ENCODE measurements at regions of chr6 and their contacts with region 1.

Region 1: DNA sequence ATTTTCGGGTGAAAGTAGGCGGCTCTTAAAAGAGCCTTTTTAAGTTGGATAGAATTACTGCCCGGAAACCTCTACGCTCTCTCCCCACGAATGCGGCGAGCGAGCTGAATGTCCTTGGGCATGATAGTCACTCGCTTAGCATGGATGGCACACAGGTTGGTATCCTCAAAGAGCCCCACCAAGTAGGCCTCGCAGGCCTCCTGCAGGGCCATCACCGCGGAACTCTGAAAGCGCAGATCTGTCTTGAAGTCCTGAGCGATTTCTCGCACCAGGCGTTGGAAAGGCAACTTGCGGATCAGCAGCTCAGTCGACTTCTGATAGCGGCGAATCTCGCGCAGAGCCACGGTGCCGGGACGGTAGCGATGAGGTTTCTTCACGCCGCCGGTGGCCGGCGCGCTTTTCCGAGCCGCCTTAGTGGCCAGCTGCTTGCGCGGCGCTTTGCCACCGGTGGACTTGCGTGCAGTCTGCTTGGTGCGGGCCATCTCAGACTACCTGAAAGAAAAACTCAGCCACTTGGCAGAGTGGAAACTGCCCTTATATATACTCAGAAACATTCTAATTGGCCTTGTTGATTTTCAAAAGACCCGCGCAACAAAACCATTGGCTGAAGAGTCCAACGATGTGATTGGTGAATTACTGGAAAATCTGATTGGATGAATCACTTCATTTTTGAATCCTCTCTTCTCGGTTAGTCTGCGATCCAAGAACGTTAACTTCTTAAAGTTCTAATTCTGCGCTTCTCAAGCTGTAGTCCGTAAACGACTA is 93.9 kb upstream of the BTN3A2 start:
- DNase-seq: peak; percentile 60 to 92 (median 75)
- ATAC-seq: peak; percentile 25
- H3K4me3 ChIP-seq: peak overlapping the region; percentile 59
- H3K4me3 Mint-ChIP-seq: no peak overlapping the region
- H3K27ac ChIP-seq: peak overlapping the region; percentile 82 to 84
- H3K27ac Mint-ChIP-seq: no peak overlapping the region
- H3K4me1 ChIP-seq: peaks cover 28% of the 10 kb centered on the region
- H3K4me1 Mint-ChIP-seq: peaks cover 7% of the 10 kb centered on the region
- H3K27me3 ChIP-seq: no peaks in the 10 kb centered on the region
- H3K27me3 Mint-ChIP-seq: no peaks in the 10 kb centered on the region
- CTCF ChIP-seq: no peak

Region 2: DNA sequence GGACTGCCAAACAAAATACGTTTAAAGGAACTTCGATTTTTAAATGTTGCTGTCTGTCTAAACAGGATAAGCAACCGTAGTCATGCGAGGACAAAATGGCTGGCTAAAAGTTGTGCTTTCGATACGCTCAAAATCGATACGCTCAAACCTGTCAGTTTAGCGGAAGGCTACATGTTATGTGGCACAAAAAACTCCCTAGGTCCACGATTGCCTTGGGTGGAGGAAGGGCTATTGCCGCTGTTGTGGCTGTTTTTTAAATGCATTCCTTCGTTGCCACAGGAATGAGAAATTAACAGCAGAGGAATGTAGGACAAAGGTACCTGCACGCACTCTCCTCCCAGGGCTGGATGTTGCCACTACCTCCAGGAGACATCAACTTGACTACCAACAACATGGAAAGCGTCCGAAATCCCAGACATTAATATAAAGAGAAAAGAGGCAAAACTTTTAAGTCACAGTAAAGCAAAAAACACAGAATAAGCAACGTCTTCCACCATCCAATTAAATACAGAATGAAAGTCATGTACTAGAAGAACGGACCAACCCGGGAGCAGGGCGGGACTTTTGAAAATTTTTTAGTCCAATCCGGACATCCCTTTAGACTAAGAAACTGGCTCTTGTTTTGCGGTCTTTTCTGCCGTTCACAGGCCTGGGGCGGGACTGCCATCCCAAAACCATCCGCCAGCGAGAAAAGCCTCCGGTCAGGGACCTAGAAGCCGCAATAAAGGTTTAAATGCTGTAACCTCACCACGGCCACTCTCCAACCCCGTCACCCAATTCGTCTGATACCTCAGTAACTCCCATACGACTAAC is 216.0 kb before region 1 on chr6:
- CTCF ChIA-PET with region 1: no interaction called
- POLR2A ChIA-PET with region 1: interaction called, 35 read pairs
- intact Hi-C with region 1: no loop called
- DNase-seq: peak; percentile 68 to 97 (median 80)
- ATAC-seq: peak; percentile 71
- H3K4me3 ChIP-seq: peak overlapping the region; percentile 89
- H3K4me3 Mint-ChIP-seq: peak overlapping the region; percentile 97
- H3K27ac ChIP-seq: peak overlapping the region; percentile 81
- H3K27ac Mint-ChIP-seq: peak overlapping the region; percentile 96
- H3K4me1 ChIP-seq: peaks cover 29% of the 10 kb centered on the region
- H3K4me1 Mint-ChIP-seq: peaks cover 28% of the 10 kb centered on the region
- H3K27me3 ChIP-seq: no peaks in the 10 kb centered on the region
- H3K27me3 Mint-ChIP-seq: no peaks in the 10 kb centered on the region
- CTCF ChIP-seq: no peak

Region 3: DNA sequence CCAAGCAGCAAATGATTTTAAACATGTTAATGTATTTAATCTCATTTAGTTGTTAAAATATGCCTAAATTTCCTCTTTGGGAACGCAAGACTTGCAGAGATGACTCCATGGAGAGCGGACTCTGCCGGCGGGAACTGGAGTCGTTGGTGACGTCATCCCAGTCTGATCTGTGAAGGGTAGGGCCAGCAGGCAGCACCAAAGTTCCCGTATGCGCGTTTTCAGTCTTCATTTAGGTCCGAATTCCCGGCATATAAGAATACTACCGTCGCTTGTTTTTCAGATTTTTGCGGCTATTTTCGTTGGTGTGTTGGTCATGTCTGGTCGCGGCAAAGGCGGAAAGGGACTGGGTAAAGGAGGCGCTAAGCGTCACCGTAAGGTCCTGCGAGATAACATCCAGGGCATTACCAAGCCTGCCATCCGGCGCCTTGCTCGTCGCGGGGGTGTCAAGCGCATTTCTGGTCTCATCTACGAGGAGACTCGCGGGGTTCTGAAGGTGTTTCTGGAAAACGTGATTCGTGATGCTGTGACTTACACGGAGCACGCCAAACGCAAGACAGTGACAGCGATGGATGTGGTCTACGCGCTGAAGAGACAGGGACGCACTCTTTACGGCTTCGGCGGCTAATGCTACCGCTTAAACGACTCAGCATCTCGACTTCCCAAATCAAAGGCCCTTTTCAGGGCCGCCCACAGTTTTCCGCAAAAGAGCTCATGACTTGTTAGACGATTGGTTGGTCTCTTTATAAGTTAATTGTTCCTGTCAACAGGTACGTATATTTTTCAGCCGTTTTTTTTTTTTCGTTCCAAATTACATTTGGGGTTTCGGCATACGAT is 66.5 kb before region 1 on chr6:
- CTCF ChIA-PET with region 1: interaction called, 7 read pairs
- POLR2A ChIA-PET with region 1: interaction called, 463 read pairs
- intact Hi-C with region 1: loop called in 1 of 2 experiments (anchors 1 kb)
- DNase-seq: peak; percentile 73 to 98 (median 80)
- ATAC-seq: peak; percentile 69
- H3K4me3 ChIP-seq: peak overlapping the region; percentile 68
- H3K4me3 Mint-ChIP-seq: no peak overlapping the region
- H3K27ac ChIP-seq: peak overlapping the region; percentile 89 to 90
- H3K27ac Mint-ChIP-seq: no peak overlapping the region
- H3K4me1 ChIP-seq: peaks cover 34% of the 10 kb centered on the region
- H3K4me1 Mint-ChIP-seq: peaks cover 8% of the 10 kb centered on the region
- H3K27me3 ChIP-seq: no peaks in the 10 kb centered on the region
- H3K27me3 Mint-ChIP-seq: no peaks in the 10 kb centered on the region
- CTCF ChIP-seq: peak; percentile 32

Region 4: DNA sequence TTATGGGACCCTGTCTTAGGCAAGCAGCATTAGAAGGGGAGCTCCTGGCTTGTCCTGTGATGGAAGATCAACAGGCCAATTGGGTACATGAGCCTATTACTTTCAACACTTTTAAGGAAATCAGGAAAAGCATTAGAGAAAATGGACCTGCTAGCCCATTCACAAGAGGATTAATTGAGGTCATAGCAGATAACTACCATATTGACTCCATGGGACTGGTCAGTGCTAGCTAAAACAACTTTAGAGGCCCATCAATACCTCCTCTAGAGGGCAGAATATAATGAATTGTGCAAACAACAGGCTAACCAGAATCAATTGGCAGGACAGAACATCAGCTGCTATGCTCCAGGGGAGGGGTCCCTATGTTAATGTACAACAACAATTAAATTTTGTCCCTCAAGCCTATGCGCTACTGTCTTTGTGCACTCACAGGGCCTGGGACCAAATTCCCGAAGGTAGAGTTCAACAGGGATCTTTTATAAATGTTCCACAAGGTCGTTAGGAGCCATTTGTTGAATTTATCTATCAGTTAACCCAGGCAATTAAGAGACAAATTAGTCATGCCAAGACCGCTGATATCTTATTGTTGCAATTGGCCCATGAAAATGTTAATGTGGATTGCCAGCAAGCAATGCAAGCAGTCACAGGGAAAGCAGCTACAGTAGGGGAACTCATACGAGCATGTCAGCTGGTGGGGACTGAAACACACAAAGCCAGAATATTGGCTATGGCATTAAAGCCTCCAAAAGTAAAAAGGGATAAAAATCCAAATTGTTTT is 12.7 kb before region 1 on chr6:
- CTCF ChIA-PET with region 1: interaction called, 11 read pairs
- POLR2A ChIA-PET with region 1: interaction called, 32 read pairs
- intact Hi-C with region 1: no loop called
- DNase-seq: no peak
- ATAC-seq: no peak
- H3K4me3 ChIP-seq: no peak overlapping the region
- H3K4me3 Mint-ChIP-seq: no peak overlapping the region
- H3K27ac ChIP-seq: no peak overlapping the region
- H3K27ac Mint-ChIP-seq: no peak overlapping the region
- H3K4me1 ChIP-seq: peaks cover 3% of the 10 kb centered on the region
- H3K4me1 Mint-ChIP-seq: peaks cover 6% of the 10 kb centered on the region
- H3K27me3 ChIP-seq: no peaks in the 10 kb centered on the region
- H3K27me3 Mint-ChIP-seq: no peaks in the 10 kb centered on the region
- CTCF ChIP-seq: no peak

Region 5: DNA sequence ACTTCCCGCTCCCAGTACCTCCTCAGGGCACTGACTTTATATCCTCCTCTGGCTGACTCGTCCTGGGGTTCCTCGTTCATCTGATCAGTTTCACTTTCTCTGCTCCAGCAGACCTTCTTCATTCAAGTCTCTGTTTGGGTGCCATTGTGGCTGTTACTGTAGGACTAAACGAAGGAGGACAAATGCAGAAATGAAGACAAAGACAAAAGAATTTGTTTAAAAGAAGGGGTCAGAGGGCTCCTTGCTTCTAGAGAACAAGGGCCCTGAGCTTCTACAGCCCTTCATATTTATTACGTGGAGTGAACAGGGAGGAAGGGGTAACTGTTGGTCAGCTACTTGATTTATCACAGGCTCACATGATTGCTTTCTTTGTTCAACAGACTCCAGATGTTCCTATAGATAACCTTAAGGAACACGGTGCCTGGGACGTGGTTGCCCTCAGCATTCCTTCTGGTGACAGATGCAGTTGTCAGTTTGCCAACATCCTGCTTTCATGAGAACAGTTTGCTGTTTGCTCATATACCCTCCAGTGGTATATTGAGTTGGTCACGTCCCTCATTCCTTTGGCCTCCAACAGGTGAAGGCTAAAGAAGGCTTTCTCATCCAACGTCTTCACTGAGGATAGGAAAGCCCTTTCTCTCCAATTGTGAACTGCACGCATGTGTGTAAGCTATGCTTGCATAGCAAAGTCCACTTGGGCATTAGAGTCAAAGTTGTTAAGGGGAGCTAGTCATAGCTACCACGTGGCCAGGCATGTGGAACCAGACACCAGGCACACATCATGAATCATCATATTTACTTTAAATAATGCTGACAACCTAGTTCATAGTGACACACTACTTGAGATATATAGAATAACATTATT is 24.8 kb after region 1 on chr6:
- CTCF ChIA-PET with region 1: no interaction called
- POLR2A ChIA-PET with region 1: no interaction called
- intact Hi-C with region 1: no loop called
- DNase-seq: peak in 1 of 14 experiments; percentile 20
- ATAC-seq: no peak
- H3K4me3 ChIP-seq: no peak overlapping the region
- H3K4me3 Mint-ChIP-seq: peak overlapping the region; percentile 42
- H3K27ac ChIP-seq: no peak overlapping the region
- H3K27ac Mint-ChIP-seq: no peak overlapping the region
- H3K4me1 ChIP-seq: peaks cover 4% of the 10 kb centered on the region
- H3K4me1 Mint-ChIP-seq: peaks cover 4% of the 10 kb centered on the region
- H3K27me3 ChIP-seq: no peaks in the 10 kb centered on the region
- H3K27me3 Mint-ChIP-seq: no peaks in the 10 kb centered on the region
- CTCF ChIP-seq: no peak

Region 6: GRCh38 chr6:26322645-26323482 is 51.8 kb after region 1 on chr6:
- CTCF ChIA-PET with region 1: interaction called, 4 read pairs
- POLR2A ChIA-PET with region 1: interaction called, 39 read pairs
- intact Hi-C with region 1: no loop called
- DNase-seq: peak in 10 of 14 experiments; percentile 20 to 88 (median 52)
- ATAC-seq: peak; percentile 75
- H3K4me3 ChIP-seq: peak overlapping the region; percentile 54
- H3K4me3 Mint-ChIP-seq: peak overlapping the region; percentile 96
- H3K27ac ChIP-seq: no peak overlapping the region
- H3K27ac Mint-ChIP-seq: peak overlapping the region; percentile 93
- H3K4me1 ChIP-seq: peaks cover 23% of the 10 kb centered on the region
- H3K4me1 Mint-ChIP-seq: peaks cover 30% of the 10 kb centered on the region
- H3K27me3 ChIP-seq: no peaks in the 10 kb centered on the region
- H3K27me3 Mint-ChIP-seq: peaks cover 35% of the 10 kb centered on the region
- CTCF ChIP-seq: no peak

Region 7: GRCh38 chr6:27146706-27147505 is 875.8 kb after region 1 on chr6:
- CTCF ChIA-PET with region 1: no interaction called
- POLR2A ChIA-PET with region 1: interaction called, 41 read pairs
- intact Hi-C with region 1: no loop called
- DNase-seq: peak; percentile 61 to 99 (median 72)
- ATAC-seq: peak; percentile 86
- H3K4me3 ChIP-seq: peak overlapping the region; percentile 69
- H3K4me3 Mint-ChIP-seq: no peak overlapping the region
- H3K27ac ChIP-seq: peak overlapping the region; percentile 84 to 97
- H3K27ac Mint-ChIP-seq: no peak overlapping the region
- H3K4me1 ChIP-seq: peaks cover 17% of the 10 kb centered on the region
- H3K4me1 Mint-ChIP-seq: peaks cover 11% of the 10 kb centered on the region
- H3K27me3 ChIP-seq: no peaks in the 10 kb centered on the region
- H3K27me3 Mint-ChIP-seq: no peaks in the 10 kb centered on the region
- CTCF ChIP-seq: no peak

Measured in CD4-positive, alpha-beta T cell (primary cell).